ENCODE measurements at regions of chr6 and their contacts with region 1.

Region 1: DNA sequence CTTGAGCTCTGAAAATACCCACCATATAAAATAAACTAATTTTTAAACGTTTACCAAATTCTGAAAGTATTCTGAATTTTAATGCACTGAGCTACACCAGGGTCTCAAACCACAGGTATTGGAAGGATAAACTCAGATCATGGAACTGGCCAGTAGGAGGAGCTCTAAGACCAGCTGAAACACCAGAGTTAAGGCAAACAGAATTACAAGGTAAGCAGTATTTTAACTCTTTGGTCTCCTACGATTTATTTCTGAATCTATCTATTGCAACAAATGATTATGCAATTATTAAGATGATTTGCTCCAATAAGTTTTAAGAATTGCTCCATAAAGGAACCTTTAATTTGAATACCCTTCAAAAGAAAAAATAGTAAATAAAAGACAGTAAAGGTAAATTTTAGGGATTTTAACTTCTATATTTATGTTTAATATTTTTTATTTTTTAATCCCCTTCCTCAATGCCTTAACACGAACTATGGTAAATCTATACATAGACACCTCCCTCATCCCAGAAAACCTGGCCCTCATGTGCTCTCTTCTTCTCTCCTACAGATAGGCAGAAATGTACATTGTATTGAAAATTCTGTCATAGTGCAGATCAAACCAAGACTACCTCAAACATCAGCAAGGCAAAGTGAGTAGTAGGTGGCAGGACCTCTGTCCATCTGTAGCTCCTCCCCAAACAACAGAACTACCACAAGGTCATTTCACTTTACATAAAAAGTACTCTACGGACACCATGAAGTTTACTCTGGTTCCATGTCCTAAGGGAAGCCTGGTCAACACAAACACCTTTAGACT is 58.4 kb downstream of the SMLR1 start:
- DNase-seq: peak; percentile 81
- ATAC-seq: peak; percentile 89
- H3K4me3 ChIP-seq: no peak overlapping the region
- H3K27ac ChIP-seq: no peak overlapping the region; the same call in 1 of the 2 replicates
- H3K4me1 ChIP-seq: peaks cover 5% of the 10 kb centered on the region
- H3K27me3 ChIP-seq: no peaks in the 10 kb centered on the region
- CTCF ChIP-seq: peak; percentile 91
- POLR2A ChIP-seq: peak; percentile 61
- RAD21 ChIP-seq: peak; percentile 96

Region 2: GRCh38 chr6:130929036-130929678 is 43.6 kb after region 1 on chr6:
- CTCF ChIA-PET with region 1: interaction called, 5 read pairs
- POLR2A ChIA-PET with region 1: interaction called, 6 read pairs
- dilution Hi-C with region 1: no loop called
- in situ Hi-C with region 1: no loop called
- intact Hi-C with region 1: loop called (anchors 5 kb)
- DNase-seq: peak; percentile 91
- ATAC-seq: peak; percentile 76
- H3K4me3 ChIP-seq: peak overlapping the region; percentile 26; the same call in 1 of the 2 replicates
- H3K27ac ChIP-seq: peak overlapping the region; percentile 39; the same call in 1 of the 2 replicates
- H3K4me1 ChIP-seq: peaks cover 19% of the 10 kb centered on the region
- H3K27me3 ChIP-seq: no peaks in the 10 kb centered on the region
- CTCF ChIP-seq: no peak
- POLR2A ChIP-seq: no peak
- RAD21 ChIP-seq: no peak

Region 3: DNA sequence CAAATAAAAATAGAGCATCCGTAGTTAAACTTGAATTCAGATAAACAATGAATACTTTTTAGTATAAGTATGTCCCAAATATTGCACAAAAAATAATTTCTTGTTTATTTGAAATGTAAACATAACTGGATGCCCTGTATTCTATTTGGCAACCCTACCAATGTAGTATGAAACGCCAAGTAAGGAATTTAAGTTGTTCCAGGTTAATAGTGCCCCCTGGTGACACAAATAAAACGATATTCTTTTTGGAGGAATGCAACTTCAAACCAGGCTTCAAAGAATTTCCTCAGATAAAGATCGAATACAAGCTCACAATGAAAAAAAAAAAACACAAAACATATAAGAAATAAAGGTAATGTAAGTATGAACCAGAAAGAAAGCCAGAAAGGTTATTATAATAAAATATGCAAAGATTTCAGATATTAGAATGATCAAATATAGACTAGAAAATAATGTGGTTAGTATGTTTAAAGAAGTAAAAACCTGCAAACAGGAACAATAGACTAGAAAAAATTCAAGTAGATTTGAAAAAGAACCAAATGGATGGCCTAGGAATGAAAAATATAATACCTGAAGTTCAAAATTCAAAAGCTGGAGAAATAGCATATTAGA is 231.3 kb after region 1 on chr6:
- CTCF ChIA-PET with region 1: interaction called, 11 read pairs
- POLR2A ChIA-PET with region 1: no interaction called
- dilution Hi-C with region 1: no loop called
- in situ Hi-C with region 1: loop called (anchors 5 kb)
- intact Hi-C with region 1: loop called (anchors 1 kb)
- DNase-seq: peak; percentile 64
- ATAC-seq: peak; percentile 64
- H3K4me3 ChIP-seq: no peak overlapping the region
- H3K27ac ChIP-seq: no peak overlapping the region
- H3K4me1 ChIP-seq: no peaks in the 10 kb centered on the region; the same call in 1 of the 2 replicates
- H3K27me3 ChIP-seq: no peaks in the 10 kb centered on the region
- CTCF ChIP-seq: peak; percentile 60
- POLR2A ChIP-seq: no peak
- RAD21 ChIP-seq: peak; percentile 79

Region 4: GRCh38 chr6:131173680-131174079 is 288.1 kb after region 1 on chr6:
- CTCF ChIA-PET with region 1: interaction called, 3 read pairs
- POLR2A ChIA-PET with region 1: no interaction called
- dilution Hi-C with region 1: no loop called
- in situ Hi-C with region 1: loop called (anchors 10 kb)
- intact Hi-C with region 1: no loop called
- DNase-seq: peak; percentile 41
- ATAC-seq: peak; percentile 68
- H3K4me3 ChIP-seq: no peak overlapping the region
- H3K27ac ChIP-seq: no peak overlapping the region
- H3K4me1 ChIP-seq: no peaks in the 10 kb centered on the region
- H3K27me3 ChIP-seq: no peaks in the 10 kb centered on the region
- CTCF ChIP-seq: no peak
- POLR2A ChIP-seq: no peak
- RAD21 ChIP-seq: no peak

Region 5: GRCh38 chr6:131532580-131533039 is 647.0 kb after region 1 on chr6:
- CTCF ChIA-PET with region 1: no interaction called
- POLR2A ChIA-PET with region 1: no interaction called
- dilution Hi-C with region 1: no loop called
- in situ Hi-C with region 1: loop called (anchors 10 kb)
- intact Hi-C with region 1: loop called (anchors 2 kb)
- DNase-seq: peak; percentile 4
- ATAC-seq: 0 out of 2 replicates have a peak, but pooled peaks have one; percentile 24
- H3K4me3 ChIP-seq: no peak overlapping the region
- H3K27ac ChIP-seq: no peak overlapping the region
- H3K4me1 ChIP-seq: 0 out of 2 replicates have a peak, but pooled peaks cover 1% of the 10 kb centered on the region
- H3K27me3 ChIP-seq: peaks cover 3% of the 10 kb centered on the region
- CTCF ChIP-seq: no peak
- POLR2A ChIP-seq: no peak
- RAD21 ChIP-seq: no peak

Measured in IMR-90 (cell line).